ENCODE measurements at regions of chr16 and their contacts with region 1.

Region 1: DNA sequence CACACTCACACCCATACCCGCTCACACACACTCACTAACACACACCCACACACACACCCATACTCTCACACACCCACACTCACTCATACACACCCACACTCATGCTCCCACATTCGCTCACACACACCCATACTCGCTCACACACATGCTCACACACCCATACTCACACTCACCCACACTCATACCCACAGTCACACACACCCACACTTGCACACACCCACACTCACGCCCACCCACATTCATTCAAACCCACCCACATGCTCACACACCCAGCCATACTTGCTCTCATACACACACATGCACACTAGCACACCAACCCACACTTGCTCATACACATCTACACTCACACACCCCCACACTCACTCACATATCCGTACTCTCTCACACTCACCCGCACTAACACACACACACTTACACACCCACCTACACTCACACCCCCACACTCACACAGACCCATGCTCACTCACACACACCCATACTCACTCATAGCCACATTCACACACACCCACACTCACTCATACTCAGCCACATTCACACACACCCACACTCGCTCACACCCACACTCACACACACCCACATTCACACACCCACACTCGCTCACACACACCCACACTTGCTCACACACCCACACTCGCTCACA is 322.4 kb upstream of the N4BP1 start:
- DNase-seq: no peak
- ATAC-seq: no peak
- H3K4me3 ChIP-seq: no peak overlapping the region
- H3K27ac ChIP-seq: no peak overlapping the region
- H3K4me1 ChIP-seq: no peaks in the 10 kb centered on the region
- H3K27me3 ChIP-seq: no peaks in the 10 kb centered on the region
- CTCF ChIP-seq: no peak
- EP300 ChIP-seq: no peak
- POLR2A ChIP-seq: no peak
- RAD21 ChIP-seq: no peak

Region 2: GRCh38 chr16:48223490-48223889 is 708.8 kb before region 1 on chr16:
- CTCF ChIA-PET with region 1: no interaction called
- POLR2A ChIA-PET with region 1: no interaction called
- in situ Hi-C with region 1: no loop called
- intact Hi-C with region 1: loop called (anchors 5 kb)
- DNase-seq: no peak
- ATAC-seq: no peak
- H3K4me3 ChIP-seq: no peak overlapping the region
- H3K27ac ChIP-seq: no peak overlapping the region
- H3K4me1 ChIP-seq: peaks cover 11% of the 10 kb centered on the region; the same call in 1 of the 2 replicates
- H3K27me3 ChIP-seq: no peaks in the 10 kb centered on the region; a peak in 1 of 5 replicates
- CTCF ChIP-seq: no peak
- EP300 ChIP-seq: no peak
- POLR2A ChIP-seq: no peak
- RAD21 ChIP-seq: no peak

Region 3: DNA sequence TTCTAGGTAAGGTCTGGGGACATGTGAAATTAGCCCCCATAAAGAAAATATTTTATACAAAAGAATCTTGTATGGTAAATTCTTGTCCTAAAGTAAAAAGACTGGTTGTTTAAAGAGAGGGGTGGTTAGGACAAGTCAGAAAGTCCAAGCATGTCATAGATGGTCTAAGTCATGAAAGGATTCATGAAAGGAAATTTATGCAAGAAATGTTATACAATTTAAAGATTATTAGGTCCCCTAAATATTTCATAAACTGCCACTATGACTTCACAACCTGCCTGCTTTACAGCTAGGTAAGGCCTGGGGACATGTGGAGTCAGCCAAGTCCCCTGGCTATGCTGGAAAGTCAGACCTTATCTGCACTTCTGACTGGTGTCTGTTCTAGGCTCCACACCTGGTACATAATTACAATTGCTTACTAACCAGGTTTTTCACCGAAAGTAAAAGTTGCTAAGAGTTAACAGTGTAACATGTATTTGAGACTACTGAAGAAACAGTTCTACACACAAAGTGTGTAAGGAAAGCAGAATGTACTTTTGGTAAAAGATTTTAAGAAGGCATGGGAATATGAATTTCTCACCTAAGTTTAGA is 339.4 kb before region 1 on chr16:
- CTCF ChIA-PET with region 1: no interaction called
- POLR2A ChIA-PET with region 1: no interaction called
- in situ Hi-C with region 1: no loop called
- intact Hi-C with region 1: no loop called
- DNase-seq: no peak
- ATAC-seq: no peak
- H3K4me3 ChIP-seq: no peak overlapping the region
- H3K27ac ChIP-seq: no peak overlapping the region
- H3K4me1 ChIP-seq: peaks cover 6% of the 10 kb centered on the region; the same call in 1 of the 2 replicates
- H3K27me3 ChIP-seq: no peaks in the 10 kb centered on the region
- CTCF ChIP-seq: no peak
- EP300 ChIP-seq: no peak
- POLR2A ChIP-seq: no peak
- RAD21 ChIP-seq: no peak

Region 4: GRCh38 chr16:49026566-49026965 is 94.2 kb after region 1 on chr16:
- CTCF ChIA-PET with region 1: no interaction called
- POLR2A ChIA-PET with region 1: no interaction called
- in situ Hi-C with region 1: no loop called
- intact Hi-C with region 1: no loop called
- DNase-seq: no peak
- ATAC-seq: no peak
- H3K4me3 ChIP-seq: no peak overlapping the region
- H3K27ac ChIP-seq: no peak overlapping the region
- H3K4me1 ChIP-seq: no peaks in the 10 kb centered on the region
- H3K27me3 ChIP-seq: peaks cover 0 to 22% of the 10 kb centered on the region in 2 experiments; a peak in 2 of 5 replicates
- CTCF ChIP-seq: no peak
- EP300 ChIP-seq: no peak
- POLR2A ChIP-seq: no peak
- RAD21 ChIP-seq: no peak